Activated CD4-positive, alpha-beta memory T cell treated with anti-CD3 and anti-CD28 coated beads for 36 hours (primary cell): ENCODE measurements at regions of chr9 and their contacts with region 1.

Region 1: DNA sequence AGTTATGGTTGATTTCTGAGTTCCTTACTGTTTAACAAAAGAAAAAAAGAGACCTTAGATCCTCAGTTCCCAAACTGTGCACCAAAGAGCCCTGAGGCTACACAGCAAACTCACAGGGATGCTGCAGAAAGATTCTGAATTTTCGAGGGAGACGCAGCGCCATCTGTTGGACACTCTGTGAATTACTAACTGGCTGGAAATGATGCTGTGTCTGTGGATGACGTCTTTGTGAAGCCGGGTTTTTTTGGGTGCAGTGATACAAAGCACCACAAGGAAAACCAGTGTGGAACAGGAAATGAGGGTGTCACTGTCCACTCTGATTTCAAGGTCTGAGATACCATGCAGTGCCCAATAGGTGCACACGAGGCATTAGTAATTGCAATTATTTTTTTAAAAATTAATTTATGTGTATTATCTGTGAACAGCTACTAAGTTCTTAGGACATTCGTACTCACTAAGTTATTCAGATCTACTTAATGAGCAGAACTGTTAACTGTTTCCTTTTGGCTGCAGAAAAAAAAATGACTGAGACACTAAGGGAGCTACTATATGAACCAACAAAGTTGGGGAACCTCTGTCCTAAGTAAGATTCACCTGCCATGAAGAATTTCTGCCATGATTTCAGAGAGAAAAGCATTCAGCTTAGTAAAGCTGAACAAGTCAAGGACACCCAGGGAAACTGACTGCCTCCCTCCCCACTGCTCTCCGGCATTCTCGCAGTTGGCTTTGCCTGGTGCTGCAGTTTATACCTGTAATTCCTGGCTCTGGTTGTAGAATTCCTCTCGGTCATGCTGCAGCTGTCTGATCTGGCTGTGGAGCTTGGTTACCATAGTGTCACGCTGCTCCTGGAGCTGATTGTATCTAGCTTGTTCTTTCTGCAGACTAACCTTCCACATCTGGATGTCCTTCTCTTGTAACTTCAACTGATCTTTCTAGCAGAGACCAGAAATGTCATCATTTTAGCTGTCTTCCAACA is 23.4 kb downstream of the SPACA9 start:
- DNase-seq: peak; percentile 89
- H3K4me3 Mint-ChIP-seq: no peak overlapping the region
- H3K27ac Mint-ChIP-seq: no peak overlapping the region
- H3K4me1 Mint-ChIP-seq: peaks cover 8% of the 10 kb centered on the region
- H3K27me3 Mint-ChIP-seq: no peaks in the 10 kb centered on the region

Region 2: DNA sequence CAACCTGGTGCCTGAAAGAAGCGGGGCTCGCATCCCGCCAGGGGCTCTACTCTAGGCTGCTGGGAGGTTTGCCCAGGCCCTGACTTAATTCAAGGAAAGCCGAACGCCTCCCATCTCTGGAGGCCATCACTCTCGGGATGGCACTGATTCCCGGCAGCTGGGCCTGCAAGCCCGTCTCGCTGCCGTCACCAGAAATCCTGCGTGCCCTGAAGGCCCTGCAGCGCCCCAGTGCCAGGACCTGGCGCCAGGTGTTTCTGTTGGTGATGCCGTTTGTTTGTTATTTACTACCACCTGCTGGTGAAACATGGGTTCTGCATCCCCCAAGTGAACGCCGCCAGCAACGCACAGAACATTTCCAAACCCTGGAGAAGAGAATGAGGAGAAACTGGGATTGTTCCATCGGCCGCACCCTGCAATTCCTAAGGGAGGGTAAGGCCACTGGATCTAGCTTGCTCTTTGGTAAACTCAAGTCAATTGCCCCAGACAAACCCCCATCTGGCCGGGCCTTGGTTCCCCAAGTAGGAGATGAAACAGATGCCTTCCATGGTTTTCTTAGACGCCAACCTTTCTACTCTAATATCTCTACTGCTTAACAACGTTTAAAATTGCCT is 102.0 kb before region 1 on chr9:
- CTCF ChIA-PET with region 1: interaction called, 3 read pairs
- POLR2A ChIA-PET with region 1: no interaction called
- intact Hi-C with region 1: loop called (anchors 5 kb)
- DNase-seq: peak; percentile 74
- H3K4me3 Mint-ChIP-seq: no peak overlapping the region
- H3K27ac Mint-ChIP-seq: no peak overlapping the region
- H3K4me1 Mint-ChIP-seq: peaks cover 5% of the 10 kb centered on the region
- H3K27me3 Mint-ChIP-seq: peaks cover 28% of the 10 kb centered on the region

Region 3: GRCh38 chr9:132877824-132878694 is 24.1 kb before region 1 on chr9 and contains the start of gene AK8:
- CTCF ChIA-PET with region 1: interaction called, 14 read pairs
- POLR2A ChIA-PET with region 1: no interaction called
- intact Hi-C with region 1: no loop called
- DNase-seq: peak; percentile 83
- H3K4me3 Mint-ChIP-seq: peak within 1 kb of the TSS; percentile 73
- H3K27ac Mint-ChIP-seq: peak within 1 kb of the TSS; percentile 8
- H3K4me1 Mint-ChIP-seq: peaks cover 25% of the 10 kb centered on the region
- H3K27me3 Mint-ChIP-seq: no peaks in the 10 kb centered on the region
- total RNA-seq, gene AK8: 0.10 to 0.39 TPM

Region 4: GRCh38 chr9:132935026-132935425 is 32.9 kb after region 1 on chr9:
- CTCF ChIA-PET with region 1: interaction called, 10 read pairs
- POLR2A ChIA-PET with region 1: no interaction called
- intact Hi-C with region 1: no loop called
- DNase-seq: no peak
- H3K4me3 Mint-ChIP-seq: no peak overlapping the region
- H3K27ac Mint-ChIP-seq: no peak overlapping the region
- H3K4me1 Mint-ChIP-seq: no peaks in the 10 kb centered on the region
- H3K27me3 Mint-ChIP-seq: no peaks in the 10 kb centered on the region